Astrocyte of the cerebellum (primary cell): ENCODE measurements at regions of chr1 and their contacts with region 1.

Region 1: DNA sequence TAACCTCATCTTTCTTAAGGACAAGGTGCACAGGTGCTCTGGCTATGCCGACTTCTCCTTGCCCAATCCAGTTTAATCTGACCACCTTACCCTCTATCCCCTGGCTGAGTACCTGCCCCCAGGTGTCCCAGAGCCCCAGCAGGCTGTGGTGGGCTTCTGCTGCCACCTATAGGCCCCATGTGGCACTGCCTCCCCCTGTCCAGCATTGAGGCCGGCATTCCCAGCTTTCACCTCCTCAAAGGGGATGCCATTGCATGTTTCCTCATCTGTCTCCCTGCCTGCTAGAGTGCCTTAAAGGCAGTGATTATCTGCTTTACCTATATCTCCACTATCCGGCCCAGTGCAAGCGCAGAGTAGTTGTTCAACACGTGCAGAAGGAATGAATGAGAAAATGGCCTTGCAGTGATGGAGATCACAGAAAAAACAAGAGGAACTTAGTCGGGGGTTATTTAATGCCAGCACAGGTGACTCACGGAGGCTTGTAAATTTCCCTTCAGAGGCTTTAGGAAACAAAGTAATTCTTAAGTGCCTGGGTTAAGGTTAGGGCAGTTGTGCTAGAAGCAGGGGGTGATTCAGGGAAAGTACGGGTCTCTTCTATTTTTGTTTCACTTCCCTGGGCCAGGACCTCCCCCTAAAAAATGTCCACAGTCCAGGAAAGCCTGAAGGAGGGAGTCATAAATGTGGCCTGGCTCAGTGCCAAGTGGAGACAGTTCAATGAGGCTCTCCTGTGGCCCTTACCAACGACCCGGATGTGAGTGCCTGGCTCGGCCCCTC is 131.8 kb upstream of the NGF start:
- DNase-seq: no peak
- H3K4me3 ChIP-seq: no peak overlapping the region
- CTCF ChIP-seq: peak; percentile 96

Region 2: DNA sequence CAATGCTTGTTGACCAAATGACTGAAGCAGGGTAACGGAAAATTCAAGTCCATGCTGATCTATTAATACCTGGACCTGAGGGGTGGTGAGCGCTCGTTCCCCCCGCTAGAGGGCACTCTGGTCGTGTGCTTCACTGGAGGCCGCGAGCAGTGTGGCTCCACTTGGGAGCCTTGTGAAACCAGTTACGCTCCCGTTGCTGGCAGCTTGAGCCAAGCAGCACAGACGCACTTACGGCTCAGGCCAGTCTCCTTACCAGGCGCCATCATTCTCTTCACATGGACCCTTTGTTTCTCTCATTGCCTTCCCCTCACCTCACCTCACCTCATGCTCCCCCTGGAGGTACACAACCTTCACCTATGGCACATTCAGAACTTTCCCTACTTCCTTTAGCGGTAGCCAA is 330.9 kb before region 1 on chr1:
- in situ Hi-C with region 1: loop called (anchors 5 kb)
- DNase-seq: peak; percentile 91
- H3K4me3 ChIP-seq: no peak overlapping the region
- CTCF ChIP-seq: peak; percentile 92

Region 3: DNA sequence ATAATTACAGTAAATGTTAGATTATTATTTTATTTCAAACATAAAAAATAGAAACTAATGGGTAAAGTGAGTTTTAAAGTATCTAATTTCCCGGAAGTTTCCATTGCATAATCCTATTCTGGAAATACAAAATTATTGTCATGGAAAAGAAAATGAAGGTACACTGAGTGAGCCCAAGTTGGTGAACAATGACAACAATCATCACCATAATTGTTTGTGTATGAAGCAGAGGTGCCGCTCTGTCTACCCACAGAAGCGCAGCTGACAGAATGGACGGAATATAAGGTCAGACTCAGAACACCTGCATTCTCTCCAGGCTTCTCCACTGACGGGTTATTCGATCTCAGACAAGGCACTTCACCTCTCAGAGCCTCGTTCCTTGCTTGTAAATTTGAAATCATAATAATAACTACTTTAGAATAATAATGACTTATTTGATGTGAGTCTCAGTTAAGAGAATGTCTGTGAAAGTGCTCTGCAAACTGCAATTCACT is 32.7 kb before region 1 on chr1:
- in situ Hi-C with region 1: no loop called
- DNase-seq: no peak
- H3K4me3 ChIP-seq: no peak overlapping the region
- CTCF ChIP-seq: no peak

Region 4: GRCh38 chr1:115530431-115530876 is 60.6 kb after region 1 on chr1:
- in situ Hi-C with region 1: no loop called
- DNase-seq: no peak
- H3K4me3 ChIP-seq: no peak overlapping the region
- CTCF ChIP-seq: no peak